ENCODE measurements at regions of chr17 and their contacts with region 1.

Region 1: GRCh38 chr17:56592487-56593085 is 913 bp upstream of the NOG start:
- DNase-seq: peak; percentile 80
- ATAC-seq: peak; percentile 82

Region 2: DNA sequence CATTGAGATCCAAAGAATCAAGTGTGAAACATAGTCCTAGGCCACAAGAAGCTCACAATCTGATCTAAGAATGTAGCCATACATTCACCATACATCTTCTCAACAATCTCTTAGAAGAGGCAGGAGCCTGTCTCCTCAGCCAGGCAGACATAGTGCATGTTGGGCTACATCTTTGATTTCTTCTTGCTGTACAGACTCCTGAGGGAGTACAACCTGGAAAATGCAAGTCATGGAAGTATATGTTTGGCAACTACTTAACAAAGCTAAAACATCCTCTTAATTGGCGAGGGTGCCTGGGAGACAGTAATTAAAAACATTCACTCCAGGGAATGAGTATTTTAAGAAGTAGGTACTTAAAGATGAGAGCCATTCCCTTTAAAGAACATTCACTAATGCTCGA is 78.3 kb before region 1 on chr17:
- intact Hi-C with region 1: no loop called
- DNase-seq: no peak
- ATAC-seq: no peak

Region 3: GRCh38 chr17:56679115-56679766 is 86.7 kb after region 1 on chr17:
- intact Hi-C with region 1: loop called (anchors 1 kb)
- DNase-seq: no peak
- ATAC-seq: no peak

Region 4: GRCh38 chr17:56779898-56780733 is 187.5 kb after region 1 on chr17:
- intact Hi-C with region 1: loop called (anchors 2 kb)
- DNase-seq: peak; percentile 93
- ATAC-seq: peak; percentile 96

Measured in Right ventricle myocardium inferior (tissue), 1 donor.